ENCODE measurements at regions of chr17 and their contacts with region 1.

Region 1: DNA sequence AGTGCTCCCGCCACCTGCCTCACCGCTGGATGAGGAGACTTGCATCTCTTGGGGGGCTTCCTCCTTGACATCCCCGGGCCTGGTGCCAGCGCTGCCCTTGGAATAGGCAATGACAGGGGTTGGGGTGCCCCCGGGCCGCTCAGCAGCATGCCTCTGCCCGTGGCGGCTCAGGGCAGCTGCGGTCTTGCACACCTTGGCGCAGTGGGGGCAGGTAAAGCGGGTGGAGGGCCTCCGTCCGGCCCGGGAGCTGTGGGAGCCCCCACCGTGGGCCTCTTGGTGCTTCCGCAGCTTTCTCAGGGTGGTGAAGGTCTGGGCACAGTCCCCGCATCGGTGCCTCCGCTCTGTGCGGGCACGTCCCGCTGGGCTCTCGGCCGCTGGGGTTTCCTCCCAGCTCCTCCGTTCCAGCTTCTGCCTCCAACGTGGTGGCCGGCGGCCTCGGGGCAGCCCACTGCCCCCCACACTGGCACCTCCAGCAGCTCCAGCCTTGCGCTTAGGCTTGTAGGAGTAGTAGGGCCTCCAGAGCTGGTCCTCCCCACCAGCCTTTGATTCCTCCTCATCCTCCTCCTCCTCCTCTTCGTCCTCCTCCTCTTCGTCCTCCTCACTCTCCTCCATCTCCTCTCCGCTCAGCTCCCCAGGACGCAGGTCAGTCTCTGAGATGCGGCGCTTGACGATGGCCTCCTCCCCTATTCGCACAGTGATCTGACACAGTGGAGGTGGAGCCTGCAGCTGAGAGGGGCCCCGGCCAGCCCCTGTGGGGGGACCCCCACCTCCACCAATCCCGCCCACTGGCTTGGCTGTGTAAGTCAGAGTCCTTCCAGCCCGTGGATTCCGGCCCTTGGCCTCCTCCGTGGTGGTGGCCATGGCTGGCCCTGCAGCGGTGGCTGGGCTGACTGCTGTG is 16.7 kb downstream of the ZBTB4 start:
- DNase-seq: no peak
- H3K4me3 ChIP-seq: no peak overlapping the region
- H3K27me3 ChIP-seq: no peaks in the 10 kb centered on the region
- CTCF ChIP-seq: no peak

Region 2: GRCh38 chr17:7403977-7404736 is 58.6 kb before region 1 on chr17 and contains the start of gene TMEM256:
- CTCF ChIA-PET with region 1: no interaction called
- POLR2A ChIA-PET with region 1: interaction called, 11 read pairs
- DNase-seq: peak; percentile 98
- H3K4me3 ChIP-seq: peak within 1 kb of the TSS; percentile 59
- H3K27me3 ChIP-seq: no peaks in the 10 kb centered on the region
- CTCF ChIP-seq: no peak
- polyA plus RNA-seq, gene TMEM256: 65.4 and 101 TPM in 2 replicates

Region 3: GRCh38 chr17:7538891-7539290 is 76.2 kb after region 1 on chr17:
- CTCF ChIA-PET with region 1: no interaction called
- POLR2A ChIA-PET with region 1: no interaction called
- DNase-seq: no peak
- H3K4me3 ChIP-seq: no peak overlapping the region
- H3K27me3 ChIP-seq: peaks cover 2% of the 10 kb centered on the region; the same call in 1 of the 2 replicates
- CTCF ChIP-seq: no peak